ENCODE measurements at regions of chr6 and their contacts with region 1.

Region 1: DNA sequence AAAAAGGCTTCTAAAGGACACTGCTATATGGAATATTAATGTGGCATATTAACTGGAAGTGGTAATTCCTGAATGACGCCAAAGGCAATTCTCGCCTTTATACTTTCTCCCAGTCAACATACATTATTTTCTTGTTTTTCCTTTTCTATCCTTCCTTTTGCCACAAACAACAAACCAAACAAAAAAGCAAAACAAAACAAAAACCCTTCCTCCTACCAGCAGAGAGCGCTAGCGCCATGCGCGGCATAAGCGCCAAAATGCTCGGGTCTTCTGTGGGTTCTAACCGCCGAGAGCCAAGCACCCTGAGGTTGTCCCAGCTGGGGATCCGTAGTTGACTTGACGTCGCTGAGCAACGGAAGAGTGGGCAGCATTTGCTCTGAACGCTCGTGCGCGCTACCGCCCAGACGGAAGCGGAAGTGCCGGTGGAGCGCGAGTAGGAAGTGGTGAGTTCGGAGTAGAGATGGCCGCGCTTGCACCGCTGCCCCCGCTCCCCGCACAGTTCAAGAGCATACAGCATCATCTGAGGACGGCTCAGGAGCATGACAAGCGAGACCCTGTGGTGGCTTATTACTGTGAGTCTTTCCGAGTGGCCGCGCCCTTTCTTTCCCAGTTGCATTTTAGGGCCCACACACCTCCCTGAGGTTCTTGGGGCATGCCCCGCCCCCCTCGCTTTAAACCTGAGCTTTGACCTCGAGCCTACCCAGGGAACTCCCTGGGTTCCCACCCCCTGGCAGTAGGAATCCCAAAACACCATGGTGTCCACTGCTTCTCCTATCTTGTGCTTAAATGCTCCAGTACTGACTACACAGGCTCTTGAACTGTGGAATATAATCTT is at the starts of genes NMBR and VTA1:
- DNase-seq: peak; percentile 99
- H3K4me3 ChIP-seq: peak within 1 kb of the TSS; percentile 77 to 92 (median 91)
- H3K27ac ChIP-seq: peak within 1 kb of the TSS; percentile 50
- H3K4me1 ChIP-seq: peaks cover 21% of the 10 kb centered on the region
- H3K27me3 ChIP-seq: no peaks in the 10 kb centered on the region
- CTCF ChIP-seq: peak; percentile 79 to 89
- POLR2A ChIP-seq: peak; percentile 90
- total RNA-seq, gene NMBR: not detected in 2 replicates
- total RNA-seq, gene VTA1: 40.9 and 45.8 TPM in 2 replicates

Region 2: GRCh38 chr6:142387997-142388815 is 241.2 kb after region 1 on chr6:
- CTCF ChIA-PET with region 1: interaction called, 5 read pairs
- POLR2A ChIA-PET with region 1: no interaction called
- dilution Hi-C with region 1: no loop called
- intact Hi-C with region 1: loop called (anchors 1 kb)
- DNase-seq: peak; percentile 81
- H3K4me3 ChIP-seq: no peak overlapping the region
- H3K27ac ChIP-seq: peak overlapping the region; percentile 11
- H3K4me1 ChIP-seq: peaks cover 7% of the 10 kb centered on the region
- H3K27me3 ChIP-seq: no peaks in the 10 kb centered on the region
- CTCF ChIP-seq: peak; percentile 47 to 50
- POLR2A ChIP-seq: no peak

Region 3: DNA sequence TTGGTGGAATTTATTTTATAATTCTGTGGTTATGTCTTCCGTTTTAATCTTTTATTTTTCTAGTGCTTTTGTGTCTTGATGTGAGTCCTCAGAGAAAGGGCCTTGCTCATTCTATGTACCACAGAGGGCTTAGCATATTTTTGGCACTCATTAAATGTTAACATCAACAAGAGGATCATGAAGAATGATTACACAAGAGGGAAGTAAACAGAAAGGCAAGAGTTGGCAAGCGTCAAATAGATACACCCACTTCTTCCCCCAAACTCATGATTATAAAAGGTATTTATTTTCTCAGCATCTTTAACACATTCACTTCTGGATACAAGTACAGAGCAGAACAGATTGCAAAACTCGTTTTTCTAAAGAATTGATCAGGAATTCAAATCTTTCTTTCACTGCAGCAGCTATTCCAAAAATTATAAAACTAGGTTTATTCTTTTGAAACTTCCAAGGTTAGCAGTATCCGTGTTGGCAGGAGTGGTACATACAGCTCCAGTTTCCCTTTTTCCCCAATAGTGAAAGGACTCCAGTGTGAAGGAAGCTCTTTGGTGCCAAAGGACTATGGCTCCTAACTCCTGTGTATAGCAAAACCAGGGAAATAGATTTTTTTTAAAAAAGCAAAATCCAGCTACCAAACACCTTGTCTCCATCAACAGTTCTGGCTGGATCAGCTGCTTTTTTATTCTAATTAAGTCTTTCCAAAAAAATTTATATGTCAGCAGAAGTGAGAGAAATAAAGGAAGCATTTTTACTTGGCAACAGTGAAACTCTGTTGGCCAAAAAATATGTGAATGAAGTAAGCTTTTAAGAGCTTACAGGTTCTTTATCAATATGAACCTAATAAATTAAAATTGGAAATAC is 376.7 kb after region 1 on chr6:
- CTCF ChIA-PET with region 1: no interaction called
- POLR2A ChIA-PET with region 1: no interaction called
- dilution Hi-C with region 1: no loop called
- intact Hi-C with region 1: no loop called
- DNase-seq: no peak
- H3K4me3 ChIP-seq: no peak overlapping the region
- H3K27ac ChIP-seq: no peak overlapping the region
- H3K4me1 ChIP-seq: no peaks in the 10 kb centered on the region
- H3K27me3 ChIP-seq: peaks cover 11 to 14% of the 10 kb centered on the region in 2 experiments
- CTCF ChIP-seq: no peak
- POLR2A ChIP-seq: no peak

Region 4: DNA sequence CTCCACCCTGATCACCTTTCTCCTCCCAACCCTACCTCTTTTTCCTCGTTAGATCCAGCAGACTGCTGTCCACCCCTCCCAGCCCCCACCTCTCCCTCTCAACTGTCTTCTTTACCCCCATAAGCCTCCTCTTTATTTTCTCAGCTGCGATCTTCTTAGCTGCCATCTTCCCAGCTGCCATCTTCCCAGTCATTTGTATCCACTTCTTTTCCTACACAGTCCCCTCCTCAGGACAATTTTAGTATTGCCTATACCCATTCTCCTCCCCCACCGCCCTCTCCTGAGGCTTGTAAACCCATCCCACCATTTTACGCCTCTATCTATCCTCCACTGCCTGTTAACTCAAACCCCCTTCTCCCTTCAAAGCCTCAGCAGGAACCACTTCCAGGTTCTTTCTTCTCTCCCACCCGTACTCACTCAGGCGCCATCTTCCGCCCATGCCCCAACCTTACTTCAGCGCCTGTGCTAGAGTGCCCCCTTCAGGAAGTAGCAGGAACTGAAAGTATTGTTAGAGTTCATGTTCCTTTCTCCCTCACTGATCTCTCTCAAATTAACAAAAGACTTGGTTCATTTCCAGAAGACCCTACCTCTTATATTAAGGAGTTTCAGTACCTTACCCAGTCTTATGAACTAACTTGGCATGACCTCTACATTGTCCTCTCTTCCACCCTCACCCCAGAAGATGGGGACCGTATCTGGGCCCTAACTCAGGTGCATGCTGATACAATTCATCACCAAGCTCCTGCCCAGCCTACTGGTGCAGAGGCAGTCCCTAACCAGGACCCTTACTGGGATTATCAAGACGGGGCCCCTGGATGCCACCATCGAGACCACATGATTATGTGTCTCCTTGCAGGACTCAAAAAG is 390.8 kb after region 1 on chr6:
- CTCF ChIA-PET with region 1: interaction called, 10 read pairs
- POLR2A ChIA-PET with region 1: no interaction called
- dilution Hi-C with region 1: no loop called
- intact Hi-C with region 1: loop called (anchors 1 kb)
- DNase-seq: peak; percentile 18
- H3K4me3 ChIP-seq: no peak overlapping the region
- H3K27ac ChIP-seq: no peak overlapping the region
- H3K4me1 ChIP-seq: no peaks in the 10 kb centered on the region
- H3K27me3 ChIP-seq: no peaks in the 10 kb centered on the region
- CTCF ChIP-seq: peak; percentile 48 to 53
- POLR2A ChIP-seq: no peak

Region 5: GRCh38 chr6:142561511-142562265 is 414.6 kb after region 1 on chr6:
- CTCF ChIA-PET with region 1: no interaction called
- POLR2A ChIA-PET with region 1: no interaction called
- dilution Hi-C with region 1: no loop called
- intact Hi-C with region 1: no loop called
- DNase-seq: no peak
- H3K4me3 ChIP-seq: no peak overlapping the region
- H3K27ac ChIP-seq: no peak overlapping the region
- H3K4me1 ChIP-seq: no peaks in the 10 kb centered on the region
- H3K27me3 ChIP-seq: peaks cover 2 to 4% of the 10 kb centered on the region in 2 experiments
- CTCF ChIP-seq: no peak
- POLR2A ChIP-seq: no peak

Measured in endothelial cell of umbilical vein (primary cell).